MCF 10A (cell line): ENCODE measurements at regions of chr14 and their contacts with region 1.

Region 1: GRCh38 chr14:24372701-24373416 is 4.9 kb downstream of the NFATC4 start:
- DNase-seq: peak; percentile 57
- H3K4me3 Mint-ChIP-seq: no peak overlapping the region
- H3K27ac Mint-ChIP-seq: no peak overlapping the region
- H3K4me1 Mint-ChIP-seq: no peaks in the 10 kb centered on the region
- H3K27me3 Mint-ChIP-seq: no peaks in the 10 kb centered on the region
- CTCF ChIP-seq: no peak

Region 2: DNA sequence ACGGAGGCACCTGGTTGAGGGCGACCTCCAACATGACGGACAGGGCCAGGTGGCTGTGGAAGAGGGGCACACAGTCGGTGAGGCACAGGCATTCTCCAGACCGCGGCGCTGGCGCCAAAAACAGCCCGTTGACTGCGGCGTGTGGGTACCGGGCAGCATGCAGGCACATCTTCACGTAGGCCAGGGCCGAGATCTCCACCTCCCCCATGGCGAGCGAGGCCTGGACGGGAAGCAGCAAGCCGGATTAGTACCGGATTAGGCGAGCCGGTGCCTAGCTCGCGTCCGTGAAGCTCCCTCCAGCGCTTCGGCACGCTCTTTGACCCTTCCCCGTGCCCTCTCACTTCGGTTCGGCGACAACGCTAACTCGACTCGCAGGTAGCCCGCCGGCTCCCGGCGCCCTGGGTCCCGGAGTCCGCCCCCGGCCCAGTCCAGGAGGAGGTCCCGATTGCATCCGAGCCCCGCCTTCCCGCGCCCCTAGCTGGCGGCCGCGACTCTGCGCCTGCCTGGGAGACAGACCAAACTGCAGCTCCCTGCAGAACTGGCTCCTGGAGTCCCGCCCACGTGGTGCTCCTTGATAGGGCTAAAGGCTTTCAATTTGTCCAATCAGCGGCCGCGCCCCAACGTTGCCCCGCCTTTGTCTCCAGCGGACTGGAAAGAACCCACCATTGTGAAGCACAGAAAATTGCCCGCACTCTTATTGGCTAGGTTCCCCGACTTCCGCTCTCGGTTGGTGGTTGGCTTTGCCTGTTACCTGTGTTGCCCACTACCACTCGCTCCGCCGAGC is 231.6 kb before region 1 on chr14 and contains the start of gene EMC9:
- CTCF ChIA-PET with region 1: no interaction called
- POLR2A ChIA-PET with region 1: no interaction called
- intact Hi-C with region 1: no loop called
- DNase-seq: peak; percentile 100
- H3K4me3 Mint-ChIP-seq: peak within 1 kb of the TSS; percentile 93
- H3K27ac Mint-ChIP-seq: peak within 1 kb of the TSS; percentile 64
- H3K4me1 Mint-ChIP-seq: peaks cover 21% of the 10 kb centered on the region
- H3K27me3 Mint-ChIP-seq: no peaks in the 10 kb centered on the region
- CTCF ChIP-seq: peak; percentile 14
- total RNA-seq, gene EMC9: 49.2 and 49.9 TPM in 2 replicates

Region 3: DNA sequence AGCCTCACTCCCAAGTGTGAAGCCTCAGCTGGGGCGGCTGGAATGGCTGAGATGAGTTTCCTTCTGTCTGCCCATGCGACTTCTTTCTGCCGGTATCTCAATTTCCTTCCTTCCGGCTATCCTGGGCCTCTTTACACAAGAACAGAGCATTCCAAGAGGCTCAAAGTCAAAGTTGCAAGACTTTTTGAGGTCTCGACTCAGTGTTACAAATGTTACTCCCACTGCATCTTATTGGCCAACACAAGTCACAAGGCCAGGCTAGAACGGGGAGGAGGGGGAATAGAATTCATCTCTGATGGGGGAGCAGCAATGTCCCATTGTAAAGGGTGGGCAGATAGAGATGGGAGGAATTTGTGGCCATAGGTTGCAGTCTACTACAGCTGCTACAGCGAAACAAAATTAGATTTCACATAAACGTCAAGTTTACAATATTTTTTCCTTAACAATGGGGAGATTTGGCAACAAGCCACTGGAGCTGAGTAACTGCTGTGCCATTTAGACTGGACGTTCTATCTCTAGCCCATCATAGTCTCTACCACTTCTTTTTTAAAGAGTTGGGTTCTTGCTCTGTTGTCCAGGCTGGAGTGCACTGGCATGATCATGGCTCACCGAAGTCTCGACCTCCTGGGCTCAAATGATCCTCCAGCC is 16.5 kb after region 1 on chr14:
- CTCF ChIA-PET with region 1: interaction called, 11 read pairs
- POLR2A ChIA-PET with region 1: no interaction called
- intact Hi-C with region 1: no loop called
- DNase-seq: no peak
- H3K4me3 Mint-ChIP-seq: no peak overlapping the region
- H3K27ac Mint-ChIP-seq: no peak overlapping the region
- H3K4me1 Mint-ChIP-seq: peaks cover 6% of the 10 kb centered on the region
- H3K27me3 Mint-ChIP-seq: peaks cover 4% of the 10 kb centered on the region
- CTCF ChIP-seq: no peak

Region 4: GRCh38 chr14:24595073-24595808 is 222.4 kb after region 1 on chr14:
- CTCF ChIA-PET with region 1: no interaction called
- POLR2A ChIA-PET with region 1: no interaction called
- intact Hi-C with region 1: no loop called
- DNase-seq: peak; percentile 30
- H3K4me3 Mint-ChIP-seq: no peak overlapping the region
- H3K27ac Mint-ChIP-seq: no peak overlapping the region
- H3K4me1 Mint-ChIP-seq: no peaks in the 10 kb centered on the region
- H3K27me3 Mint-ChIP-seq: peaks cover 14% of the 10 kb centered on the region
- CTCF ChIP-seq: no peak